Transverse colon (tissue), 4 donors: ENCODE measurements at regions of chr11 and their contacts with region 1.

Region 1: DNA sequence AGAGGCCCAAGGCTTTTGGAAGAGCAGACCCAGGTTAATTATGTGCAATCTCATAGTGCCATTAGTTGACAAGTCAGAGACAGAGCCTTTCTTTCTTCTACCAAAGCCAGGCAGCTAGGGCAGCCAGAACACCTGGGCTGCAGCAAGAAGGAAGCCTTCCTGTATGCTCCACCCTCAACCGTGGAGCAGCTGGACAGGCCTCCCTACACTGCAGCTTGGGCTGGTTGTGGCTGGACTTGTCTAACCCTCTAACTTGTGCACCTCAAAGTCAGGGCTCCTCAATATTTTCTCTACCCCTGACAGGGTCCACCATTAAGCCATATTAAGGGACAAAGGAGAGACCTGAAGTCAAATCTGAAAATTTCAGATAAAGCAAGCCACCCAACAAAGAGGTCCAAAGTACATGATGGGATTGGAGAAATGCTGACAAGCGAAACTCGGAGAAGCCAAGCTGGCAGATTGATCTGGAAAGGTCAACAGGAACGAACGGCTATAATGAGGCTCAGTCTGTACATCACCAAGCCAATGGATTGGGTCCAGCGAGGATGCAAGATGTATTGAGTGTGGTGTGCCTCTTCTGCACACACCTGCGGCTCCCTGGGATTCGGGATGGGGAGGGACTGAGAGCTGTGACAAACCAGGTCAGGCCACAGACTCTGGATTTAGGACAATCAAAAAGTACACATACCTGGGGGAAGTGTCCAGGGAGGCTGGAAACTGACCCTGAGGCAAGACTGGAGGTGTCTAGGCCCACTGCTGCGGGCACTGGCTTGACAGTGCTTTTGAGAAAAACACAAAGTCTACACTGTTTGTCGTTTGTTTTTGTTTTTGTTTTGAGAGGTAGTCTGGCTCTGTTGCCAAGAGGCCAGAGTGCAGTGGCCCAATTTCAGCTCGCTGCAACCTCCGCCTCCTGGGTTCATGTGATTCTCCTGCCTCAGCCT is 11.7 kb upstream of the SLC43A3 start:
- DNase-seq: no peak
- H3K4me3 ChIP-seq: no peak overlapping the region
- H3K27ac ChIP-seq: no peak overlapping the region
- H3K4me1 ChIP-seq: peaks cover 0 to 8% (median 2%) of the 10 kb centered on the region in 4 donors
- H3K27me3 ChIP-seq: no peaks in the 10 kb centered on the region
- CTCF ChIP-seq: no peak
- EP300 ChIP-seq: no peak
- POLR2A ChIP-seq: no peak

Region 2: DNA sequence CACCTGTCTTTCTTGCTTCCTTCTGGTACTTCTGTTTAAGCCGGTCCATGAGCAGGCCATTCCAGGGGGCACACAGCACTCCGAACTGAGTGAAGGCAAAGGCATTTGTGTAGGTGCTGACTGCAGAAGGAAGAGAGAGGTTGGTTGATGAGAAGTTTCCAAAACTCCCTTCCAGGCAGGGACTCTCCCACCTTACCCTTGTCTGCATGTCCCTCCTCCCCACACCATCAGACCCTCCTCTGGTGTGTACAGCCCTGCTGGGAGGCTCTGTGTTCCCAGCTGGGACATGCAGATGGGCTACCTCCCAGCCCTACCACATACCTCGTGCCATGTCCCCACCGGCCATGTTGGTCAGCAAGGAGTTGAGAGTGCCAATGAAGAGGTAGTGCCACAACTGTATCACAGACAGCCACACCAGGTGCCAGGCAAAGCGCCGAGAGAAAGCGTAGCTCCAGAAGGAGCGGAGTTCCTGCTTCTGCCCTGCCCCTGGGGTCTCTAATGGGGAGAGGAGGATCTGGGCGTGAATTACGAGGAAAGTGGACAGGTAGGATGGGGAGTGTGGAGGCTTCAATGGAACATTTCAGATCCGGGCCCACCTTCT is 23.9 kb before region 1 on chr11:
- in situ Hi-C with region 1: no loop called
- intact Hi-C with region 1: loop called (anchors 2 kb)
- DNase-seq: no peak
- H3K4me3 ChIP-seq: no peak overlapping the region
- H3K27ac ChIP-seq: no peak overlapping the region
- H3K4me1 ChIP-seq: no peaks in the 10 kb centered on the region
- H3K27me3 ChIP-seq: no peaks in the 10 kb centered on the region
- CTCF ChIP-seq: no peak
- EP300 ChIP-seq: no peak
- POLR2A ChIP-seq: no peak